ENCODE measurements at regions of chr7 and their contacts with region 1.

Region 1: DNA sequence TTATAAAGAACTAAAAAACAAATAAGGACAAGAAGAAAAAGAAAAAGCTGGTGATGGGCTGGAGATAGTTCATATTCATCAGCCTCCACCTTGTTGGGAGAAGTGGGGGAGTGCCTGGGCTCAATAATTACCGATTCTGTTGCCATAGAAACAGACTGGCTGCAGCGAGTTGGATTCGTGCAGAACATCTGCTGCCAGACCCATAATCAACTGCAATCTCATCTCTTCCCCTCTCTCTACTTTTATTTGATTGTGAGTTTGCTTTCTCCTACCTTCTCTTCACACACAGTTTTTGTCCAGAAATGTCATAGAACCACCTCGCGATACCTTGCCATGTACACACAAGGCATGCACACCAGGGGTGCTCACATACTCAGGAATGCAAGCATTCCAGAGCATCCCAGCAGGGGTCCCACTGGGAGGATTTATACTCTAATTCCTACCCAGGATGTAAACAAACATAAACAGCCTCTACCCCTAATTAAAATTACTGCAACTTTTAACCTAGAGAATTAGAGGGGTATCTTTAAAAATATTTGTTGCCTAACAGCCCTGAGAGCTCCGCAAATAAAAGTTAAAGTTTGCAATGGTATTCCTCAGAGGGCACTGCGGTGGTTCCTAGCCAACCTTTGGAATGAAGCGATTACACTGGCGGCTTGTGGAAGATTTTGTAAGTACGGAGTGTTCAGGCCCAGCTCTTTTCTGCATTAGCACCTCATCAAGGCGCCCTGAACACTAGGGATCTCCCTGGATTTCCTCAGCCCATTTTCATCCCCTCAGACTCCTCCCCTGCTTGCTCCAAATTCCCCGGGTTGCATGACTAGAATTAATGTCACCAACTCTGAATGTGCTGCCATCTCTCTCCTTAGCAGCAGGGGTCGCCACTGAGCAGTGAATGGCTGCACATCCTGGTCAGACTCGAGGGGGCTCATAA is 262.4 kb upstream of the AOAH start:
- DNase-seq: peak; percentile 36
- ATAC-seq: peak; percentile 68
- H3K4me3 ChIP-seq: no peak overlapping the region
- H3K27ac ChIP-seq: no peak overlapping the region
- H3K4me1 ChIP-seq: peaks cover 43% of the 10 kb centered on the region
- H3K27me3 ChIP-seq: no peaks in the 10 kb centered on the region
- CTCF ChIP-seq: peak; percentile 89
- EP300 ChIP-seq: no peak
- POLR2A ChIP-seq: no peak
- RAD21 ChIP-seq: peak; percentile 68

Region 2: GRCh38 chr7:36389371-36390198 is 597.1 kb before region 1 on chr7 and contains the start of gene ANLN:
- CTCF ChIA-PET with region 1: no interaction called
- POLR2A ChIA-PET with region 1: no interaction called
- in situ Hi-C with region 1: no loop called
- intact Hi-C with region 1: loop called (anchors 5 kb)
- DNase-seq: peak; percentile 92
- ATAC-seq: peak; percentile 83
- H3K4me3 ChIP-seq: peak within 1 kb of the TSS; percentile 93 to 97 (median 97)
- H3K27ac ChIP-seq: peak within 1 kb of the TSS; percentile 89
- H3K4me1 ChIP-seq: peaks cover 45% of the 10 kb centered on the region
- H3K27me3 ChIP-seq: no peaks in the 10 kb centered on the region; a peak in 1 of 5 replicates
- CTCF ChIP-seq: no peak
- EP300 ChIP-seq: peak in 1 of 2 experiments; percentile 11; a peak in 1 of 4 replicates
- POLR2A ChIP-seq: peak; percentile 71 to 96
- RAD21 ChIP-seq: no peak; the same call in 1 of the 2 replicates
- total RNA-seq, gene ANLN: 38.8 and 72.0 TPM in 2 replicates

Region 3: GRCh38 chr7:36904802-36905201 is 81.9 kb before region 1 on chr7:
- CTCF ChIA-PET with region 1: no interaction called
- POLR2A ChIA-PET with region 1: no interaction called
- in situ Hi-C with region 1: no loop called
- intact Hi-C with region 1: no loop called
- DNase-seq: no peak
- ATAC-seq: no peak
- H3K4me3 ChIP-seq: no peak overlapping the region
- H3K27ac ChIP-seq: no peak overlapping the region
- H3K4me1 ChIP-seq: peaks cover 20% of the 10 kb centered on the region
- H3K27me3 ChIP-seq: no peaks in the 10 kb centered on the region; a peak in 2 of 5 replicates
- CTCF ChIP-seq: no peak
- EP300 ChIP-seq: no peak
- POLR2A ChIP-seq: no peak
- RAD21 ChIP-seq: no peak

Region 4: GRCh38 chr7:37181550-37181932 is 194.8 kb after region 1 on chr7:
- CTCF ChIA-PET with region 1: interaction called, 19 read pairs
- POLR2A ChIA-PET with region 1: interaction called, 10 read pairs
- in situ Hi-C with region 1: loop called (anchors 5 kb)
- intact Hi-C with region 1: loop called (anchors 1 kb)
- DNase-seq: no peak
- ATAC-seq: no peak
- H3K4me3 ChIP-seq: no peak overlapping the region
- H3K27ac ChIP-seq: no peak overlapping the region
- H3K4me1 ChIP-seq: peaks cover 41% of the 10 kb centered on the region
- H3K27me3 ChIP-seq: no peaks in the 10 kb centered on the region
- CTCF ChIP-seq: no peak
- EP300 ChIP-seq: no peak
- POLR2A ChIP-seq: no peak
- RAD21 ChIP-seq: no peak